PC-9 (cell line): ENCODE measurements at regions of chr13 and their contacts with region 1.

Region 1: DNA sequence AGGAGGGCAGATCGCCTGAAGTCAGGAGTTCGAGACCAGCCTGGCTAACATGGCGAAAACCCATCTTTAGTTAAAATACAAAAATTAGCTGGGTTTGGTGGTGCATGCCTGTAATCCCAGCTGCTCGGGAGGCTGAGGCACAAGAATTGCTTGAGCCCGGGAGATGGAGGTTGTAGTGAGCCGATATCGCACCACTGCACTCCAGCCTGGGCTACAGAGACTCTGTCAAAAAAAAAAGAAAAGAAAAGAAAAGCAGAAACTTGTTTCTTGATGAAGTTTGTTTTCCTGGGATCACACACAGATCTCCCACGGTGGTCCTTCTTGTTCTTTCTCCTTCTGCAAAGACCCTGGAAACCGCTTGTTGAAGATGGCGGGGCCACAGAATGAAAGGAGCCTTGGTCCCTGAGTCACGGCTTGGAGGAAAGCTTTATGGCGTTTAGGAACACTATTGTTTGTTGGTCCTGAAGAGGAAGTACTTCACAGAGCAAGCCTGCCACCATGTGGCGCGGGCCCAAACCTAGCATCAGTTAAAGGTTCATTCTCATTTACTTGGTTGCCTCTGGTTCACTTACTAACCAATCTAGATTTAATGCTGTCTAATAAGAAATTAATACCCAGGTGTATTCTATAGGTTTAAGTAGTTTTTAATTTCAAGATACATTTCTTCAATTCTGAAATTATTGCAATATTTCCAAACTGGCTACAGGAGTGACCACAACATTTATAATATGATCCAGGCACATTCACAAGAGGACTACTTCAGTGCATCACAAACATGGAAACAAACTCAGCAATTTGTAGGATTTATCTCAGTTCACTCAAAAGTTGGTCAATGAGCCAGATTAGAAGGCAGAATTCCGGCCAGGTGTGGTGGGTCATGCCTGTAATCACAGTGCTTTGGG is 21.3 kb upstream of the ARL11 start:
- DNase-seq: peak; percentile 69 to 75
- H3K4me3 ChIP-seq: no peak overlapping the region
- H3K27ac ChIP-seq: no peak overlapping the region
- H3K4me1 ChIP-seq: no peaks in the 10 kb centered on the region
- H3K27me3 ChIP-seq: no peaks in the 10 kb centered on the region
- CTCF ChIP-seq: peak; percentile 82

Region 2: GRCh38 chr13:49165798-49166752 is 440.9 kb before region 1 on chr13:
- CTCF ChIA-PET with region 1: no interaction called
- POLR2A ChIA-PET with region 1: interaction called, 12 read pairs
- intact Hi-C with region 1: no loop called
- DNase-seq: no peak
- H3K4me3 ChIP-seq: no peak overlapping the region
- H3K27ac ChIP-seq: no peak overlapping the region
- H3K4me1 ChIP-seq: no peaks in the 10 kb centered on the region
- H3K27me3 ChIP-seq: no peaks in the 10 kb centered on the region
- CTCF ChIP-seq: no peak

Region 3: DNA sequence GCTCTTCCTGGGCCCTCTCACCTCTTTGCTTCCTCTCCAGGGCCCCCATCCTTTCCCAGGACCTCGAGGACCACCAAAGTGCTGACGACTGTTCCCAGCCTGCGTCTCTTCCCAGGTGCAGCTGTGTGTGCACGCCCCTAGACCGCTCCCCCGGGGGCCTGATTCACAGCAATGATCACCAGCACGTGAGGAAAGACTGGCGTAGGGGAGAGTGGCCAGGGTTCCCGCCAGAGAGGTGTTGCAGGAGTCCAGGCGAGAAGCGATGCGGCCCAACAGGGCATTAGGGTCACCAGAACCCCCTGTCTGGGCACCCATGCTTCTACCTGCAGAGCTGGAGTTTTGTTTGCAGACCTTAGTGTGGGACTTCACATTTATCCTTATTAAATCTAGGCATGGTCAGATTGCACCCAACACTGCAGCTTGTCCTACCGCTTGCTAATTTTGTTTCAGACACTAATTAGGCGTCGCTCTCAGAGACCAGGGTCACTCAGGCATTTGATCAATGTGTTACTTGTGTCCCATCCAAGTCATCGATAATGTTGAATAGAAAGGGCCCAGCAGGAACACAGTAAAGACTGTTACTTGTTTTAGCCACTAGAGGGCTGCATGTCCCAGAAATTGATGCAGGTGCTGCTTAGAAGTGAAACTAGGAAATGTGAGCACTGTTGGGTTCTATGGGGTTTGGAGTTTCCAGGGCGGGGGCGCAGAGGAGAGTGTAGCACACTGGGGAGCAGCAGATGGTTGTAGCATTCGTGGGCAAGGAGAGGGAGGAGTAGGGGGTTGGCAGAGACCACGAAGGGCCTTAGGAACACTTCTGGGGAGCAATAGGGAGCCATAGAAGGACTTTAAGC is 306.0 kb before region 1 on chr13:
- CTCF ChIA-PET with region 1: no interaction called
- POLR2A ChIA-PET with region 1: no interaction called
- intact Hi-C with region 1: loop called (anchors 1 kb)
- DNase-seq: peak; percentile 47 to 65
- H3K4me3 ChIP-seq: no peak overlapping the region; the same call in 1 of the 2 replicates
- H3K27ac ChIP-seq: no peak overlapping the region
- H3K4me1 ChIP-seq: no peaks in the 10 kb centered on the region; the same call in 1 of the 2 replicates
- H3K27me3 ChIP-seq: no peaks in the 10 kb centered on the region
- CTCF ChIP-seq: peak; percentile 94

Region 4: GRCh38 chr13:49443704-49444523 is 163.1 kb before region 1 on chr13 and contains the starts of genes CAB39L and SETDB2:
- CTCF ChIA-PET with region 1: interaction called, 4 read pairs
- POLR2A ChIA-PET with region 1: no interaction called
- intact Hi-C with region 1: loop called (anchors 2 kb)
- DNase-seq: peak; percentile 97 to 99
- H3K4me3 ChIP-seq: peak within 1 kb of the TSS; percentile 77
- H3K27ac ChIP-seq: peak within 1 kb of the TSS; percentile 71
- H3K4me1 ChIP-seq: peaks cover 6% of the 10 kb centered on the region; the same call in 1 of the 2 replicates
- H3K27me3 ChIP-seq: no peaks in the 10 kb centered on the region
- CTCF ChIP-seq: peak; percentile 35; the same call in 1 of the 2 replicates
- total RNA-seq, gene CAB39L: 10.2 and 10.7 TPM in 2 replicates
- total RNA-seq, gene SETDB2: 5.2 and 6.9 TPM in 2 replicates

Region 5: DNA sequence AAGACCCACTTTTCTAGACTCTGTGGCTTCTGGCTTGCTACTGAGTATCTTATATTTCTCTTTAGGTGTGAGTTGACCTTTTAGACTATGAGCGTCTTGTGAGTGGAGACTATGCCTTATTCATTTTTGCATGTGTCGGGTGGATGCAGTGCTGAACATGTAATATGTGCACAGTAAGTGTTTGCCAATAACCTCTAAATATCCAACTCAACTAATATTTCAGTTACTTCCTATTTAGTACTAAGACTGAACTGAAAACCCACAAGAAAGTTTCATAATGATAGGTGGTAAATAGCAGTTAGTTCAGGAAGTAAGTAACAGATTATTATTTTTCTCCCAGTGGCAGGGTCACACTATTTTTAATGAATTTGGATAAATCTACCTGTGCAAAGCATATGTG is 677.5 kb after region 1 on chr13:
- CTCF ChIA-PET with region 1: no interaction called
- POLR2A ChIA-PET with region 1: no interaction called
- intact Hi-C with region 1: no loop called
- DNase-seq: no peak
- H3K4me3 ChIP-seq: no peak overlapping the region
- H3K27ac ChIP-seq: no peak overlapping the region
- H3K4me1 ChIP-seq: no peaks in the 10 kb centered on the region
- H3K27me3 ChIP-seq: no peaks in the 10 kb centered on the region
- CTCF ChIP-seq: no peak

Region 6: GRCh38 chr13:50353651-50354415 is 746.8 kb after region 1 on chr13:
- CTCF ChIA-PET with region 1: no interaction called
- POLR2A ChIA-PET with region 1: no interaction called
- intact Hi-C with region 1: no loop called
- DNase-seq: no peak
- H3K4me3 ChIP-seq: no peak overlapping the region
- H3K27ac ChIP-seq: no peak overlapping the region
- H3K4me1 ChIP-seq: peaks cover 26% of the 10 kb centered on the region
- H3K27me3 ChIP-seq: no peaks in the 10 kb centered on the region
- CTCF ChIP-seq: no peak